Activated CD4-positive, alpha-beta memory T cell treated with anti-CD3 and anti-CD28 coated beads for 36 hours (primary cell): ENCODE measurements at regions of chr17 and their contacts with region 1.

Region 1: GRCh38 chr17:17313350-17313991 is 10.3 kb downstream of the NT5M start:
- DNase-seq: peak; percentile 81
- H3K4me3 Mint-ChIP-seq: no peak overlapping the region
- H3K27ac Mint-ChIP-seq: no peak overlapping the region
- H3K4me1 Mint-ChIP-seq: no peaks in the 10 kb centered on the region
- H3K27me3 Mint-ChIP-seq: no peaks in the 10 kb centered on the region

Region 2: GRCh38 chr17:17001874-17002520 is 311.5 kb before region 1 on chr17:
- CTCF ChIA-PET with region 1: interaction called, 5 read pairs
- POLR2A ChIA-PET with region 1: no interaction called
- intact Hi-C with region 1: loop called (anchors 2 kb)
- DNase-seq: peak; percentile 81
- H3K4me3 Mint-ChIP-seq: no peak overlapping the region
- H3K27ac Mint-ChIP-seq: no peak overlapping the region
- H3K4me1 Mint-ChIP-seq: no peaks in the 10 kb centered on the region
- H3K27me3 Mint-ChIP-seq: no peaks in the 10 kb centered on the region

Region 3: DNA sequence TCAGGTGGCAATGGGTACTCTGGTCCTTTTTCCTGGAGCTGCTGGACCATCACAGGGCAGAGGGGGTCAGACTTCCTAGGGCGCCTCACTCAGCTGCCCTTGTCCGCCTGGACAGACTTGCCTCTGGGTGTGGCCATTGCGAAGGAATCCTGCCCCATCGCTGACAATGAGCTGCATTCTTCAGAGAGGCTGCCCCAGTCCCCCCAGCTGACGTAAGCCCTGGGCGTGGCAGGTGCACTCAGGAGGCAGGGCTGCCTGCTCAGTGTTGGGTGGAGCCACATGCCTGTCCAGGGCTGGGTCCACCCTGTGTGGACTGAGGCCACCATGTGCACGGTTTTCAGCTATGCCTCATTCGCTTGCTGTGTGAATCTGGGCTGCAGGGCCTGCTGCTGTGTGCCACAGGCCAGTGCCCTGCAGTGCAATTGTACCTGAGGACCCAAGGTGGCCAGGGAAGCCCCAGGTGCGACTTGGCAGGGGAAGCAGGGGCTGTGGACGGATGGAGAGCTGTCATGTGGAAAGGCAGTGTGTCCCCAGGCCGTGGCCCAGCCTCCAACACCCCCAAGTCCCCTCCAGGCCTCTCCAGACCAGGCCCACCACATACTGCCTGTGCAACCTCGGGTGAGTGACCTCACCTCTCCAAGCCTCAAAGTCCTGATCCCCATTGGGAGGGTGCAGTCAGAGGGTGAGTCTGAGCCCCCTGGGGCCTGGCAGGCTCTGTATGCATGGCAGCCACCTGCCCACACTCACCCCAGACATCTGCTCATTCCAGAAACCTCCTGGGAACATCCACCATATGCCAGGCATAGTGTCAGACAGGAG is 285.2 kb before region 1 on chr17:
- CTCF ChIA-PET with region 1: no interaction called
- POLR2A ChIA-PET with region 1: no interaction called
- intact Hi-C with region 1: no loop called
- DNase-seq: no peak
- H3K4me3 Mint-ChIP-seq: no peak overlapping the region
- H3K27ac Mint-ChIP-seq: no peak overlapping the region
- H3K4me1 Mint-ChIP-seq: no peaks in the 10 kb centered on the region
- H3K27me3 Mint-ChIP-seq: no peaks in the 10 kb centered on the region

Region 4: DNA sequence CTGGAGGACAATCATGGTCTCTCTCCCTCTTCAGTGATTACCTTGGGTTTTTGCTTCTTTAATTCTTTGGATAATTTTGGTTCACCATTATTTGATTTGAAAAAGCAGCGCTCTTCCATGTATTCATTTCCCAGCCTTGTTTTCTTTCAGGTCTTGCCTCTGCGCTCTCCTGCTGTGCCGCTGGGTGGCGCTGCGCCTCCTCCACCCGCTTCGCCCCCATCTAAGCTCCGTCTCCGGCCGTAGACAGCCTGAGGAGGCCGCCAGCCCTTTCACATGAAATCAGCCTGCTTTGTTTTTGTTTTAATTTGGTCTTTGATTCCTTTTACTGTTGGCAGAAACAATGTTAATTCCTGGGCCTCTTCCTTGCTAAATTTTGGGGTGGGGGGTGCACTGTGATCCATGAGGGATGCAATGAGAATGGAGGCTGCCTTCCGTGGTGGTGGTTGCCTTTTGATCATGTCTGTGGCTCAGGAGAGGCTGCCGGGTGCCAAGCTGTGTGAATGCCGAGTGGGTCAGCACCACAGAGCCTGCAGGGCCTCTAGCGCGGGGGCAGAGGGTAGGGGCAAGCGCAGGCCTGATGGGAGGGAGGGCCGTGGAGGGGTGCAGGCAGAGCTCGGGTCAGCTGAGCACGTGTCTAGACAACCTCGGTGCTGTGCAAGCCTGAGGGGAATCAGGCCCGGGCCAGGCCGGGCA is 171.5 kb before region 1 on chr17:
- CTCF ChIA-PET with region 1: interaction called, 5 read pairs
- POLR2A ChIA-PET with region 1: no interaction called
- intact Hi-C with region 1: loop called (anchors 1 kb)
- DNase-seq: peak; percentile 72
- H3K4me3 Mint-ChIP-seq: no peak overlapping the region
- H3K27ac Mint-ChIP-seq: peak overlapping the region; percentile 10
- H3K4me1 Mint-ChIP-seq: peaks cover 18% of the 10 kb centered on the region
- H3K27me3 Mint-ChIP-seq: no peaks in the 10 kb centered on the region

Region 5: DNA sequence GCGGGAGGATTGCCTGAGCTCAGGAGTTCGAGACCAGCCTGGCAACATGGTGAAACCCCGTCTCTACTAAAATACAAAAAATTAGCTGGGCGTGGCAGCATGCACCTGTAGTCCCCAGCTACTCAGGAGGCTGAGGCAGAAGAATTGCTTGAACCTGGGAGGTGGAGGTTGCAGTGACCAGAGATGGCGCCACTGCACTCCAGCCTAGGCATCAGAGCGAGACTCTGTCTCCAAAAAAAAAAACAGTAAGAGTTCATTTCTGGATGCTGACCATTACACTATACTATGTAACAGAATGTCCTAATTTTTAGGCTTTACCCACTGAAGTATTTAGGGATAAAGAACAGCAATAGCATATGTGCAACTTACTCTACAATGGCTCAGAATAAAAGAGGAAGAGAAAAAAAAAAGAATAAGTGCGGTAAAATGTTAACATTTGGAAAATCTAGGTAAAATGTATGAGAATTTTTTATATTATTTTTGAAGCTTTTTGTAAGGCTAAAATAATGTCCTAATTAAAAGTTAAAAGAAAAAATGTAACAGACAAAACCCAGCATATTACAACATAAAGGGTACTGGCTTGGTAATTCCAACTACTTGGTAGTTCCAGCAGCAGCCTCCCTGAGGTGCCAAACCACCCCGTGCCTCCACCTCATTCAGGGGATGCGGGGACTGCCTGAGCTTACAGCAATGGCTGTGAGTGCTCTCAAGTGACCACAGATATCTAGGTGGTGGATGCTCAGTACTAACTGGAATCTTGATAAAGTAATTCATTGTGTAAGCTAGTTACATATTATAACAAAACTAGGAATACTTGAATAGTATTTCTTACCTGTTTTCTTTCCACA is 43.3 kb before region 1 on chr17:
- CTCF ChIA-PET with region 1: interaction called, 13 read pairs
- POLR2A ChIA-PET with region 1: no interaction called
- intact Hi-C with region 1: loop called (anchors 5 kb)
- DNase-seq: peak; percentile 50
- H3K4me3 Mint-ChIP-seq: no peak overlapping the region
- H3K27ac Mint-ChIP-seq: no peak overlapping the region
- H3K4me1 Mint-ChIP-seq: no peaks in the 10 kb centered on the region
- H3K27me3 Mint-ChIP-seq: no peaks in the 10 kb centered on the region

Region 6: GRCh38 chr17:17280613-17281549 is 32.6 kb before region 1 on chr17 and contains the start of gene COPS3:
- CTCF ChIA-PET with region 1: interaction called, 3 read pairs
- POLR2A ChIA-PET with region 1: no interaction called
- intact Hi-C with region 1: loop called (anchors 1 kb)
- DNase-seq: peak; percentile 98
- H3K4me3 Mint-ChIP-seq: peak within 1 kb of the TSS; percentile 87
- H3K27ac Mint-ChIP-seq: peak within 1 kb of the TSS; percentile 83
- H3K4me1 Mint-ChIP-seq: peaks cover 31% of the 10 kb centered on the region
- H3K27me3 Mint-ChIP-seq: no peaks in the 10 kb centered on the region
- total RNA-seq, gene COPS3: 96.1 to 104 TPM